Activated CD4-positive, alpha-beta memory T cell treated with anti-CD3 and anti-CD28 coated beads for 36 hours (primary cell): ENCODE measurements at regions of chr12 and their contacts with region 1.

Region 1: GRCh38 chr12:116708826-116709756 is 28.8 kb downstream of the SPRING1 start:
- DNase-seq: peak; percentile 64
- H3K4me3 Mint-ChIP-seq: no peak overlapping the region
- H3K27ac Mint-ChIP-seq: no peak overlapping the region
- H3K4me1 Mint-ChIP-seq: peaks cover 7% of the 10 kb centered on the region
- H3K27me3 Mint-ChIP-seq: no peaks in the 10 kb centered on the region

Region 2: DNA sequence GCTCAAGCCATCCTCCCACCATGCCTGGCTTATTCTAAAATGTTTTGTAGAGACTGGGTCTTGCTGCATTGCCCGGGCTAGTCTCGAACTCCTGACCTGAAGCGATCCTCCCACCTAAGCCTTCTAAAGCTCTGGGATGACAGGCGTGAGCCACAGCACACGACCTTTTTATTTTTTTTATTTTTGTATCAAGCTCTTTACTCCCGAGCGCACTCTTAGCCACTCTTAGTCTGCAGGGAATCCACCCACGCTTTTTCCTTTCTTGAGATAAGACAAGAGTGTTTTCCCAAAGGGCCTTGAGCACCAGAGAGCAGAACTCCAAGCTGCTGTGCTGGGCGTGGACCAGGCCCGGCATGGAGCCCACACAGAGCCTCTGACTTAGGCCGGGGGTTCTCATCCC is 126.5 kb before region 1 on chr12:
- CTCF ChIA-PET with region 1: no interaction called
- POLR2A ChIA-PET with region 1: no interaction called
- intact Hi-C with region 1: no loop called
- DNase-seq: no peak
- H3K4me3 Mint-ChIP-seq: no peak overlapping the region
- H3K27ac Mint-ChIP-seq: no peak overlapping the region
- H3K4me1 Mint-ChIP-seq: no peaks in the 10 kb centered on the region
- H3K27me3 Mint-ChIP-seq: no peaks in the 10 kb centered on the region

Region 3: DNA sequence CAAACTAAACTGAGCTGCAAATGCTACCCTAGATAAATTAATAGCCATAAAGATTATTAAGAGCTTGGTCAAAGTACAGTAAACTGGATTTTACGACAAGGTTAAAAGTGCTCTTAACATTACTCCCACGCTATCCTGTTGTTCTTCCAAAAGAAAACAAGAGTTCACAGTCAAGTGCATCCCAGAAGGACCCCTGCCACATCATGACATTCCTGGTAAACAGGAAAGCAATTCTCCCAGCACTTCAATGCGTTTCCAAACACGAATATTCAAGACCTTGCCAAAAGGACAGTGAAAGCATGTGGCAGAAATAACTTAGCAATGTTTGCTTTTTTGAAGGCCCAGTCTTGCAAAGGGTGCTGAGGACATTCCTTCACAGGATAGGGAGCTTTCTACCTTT is 17.6 kb after region 1 on chr12:
- CTCF ChIA-PET with region 1: interaction called, 13 read pairs
- POLR2A ChIA-PET with region 1: no interaction called
- intact Hi-C with region 1: no loop called
- DNase-seq: no peak
- H3K4me3 Mint-ChIP-seq: no peak overlapping the region
- H3K27ac Mint-ChIP-seq: no peak overlapping the region
- H3K4me1 Mint-ChIP-seq: peaks cover 29% of the 10 kb centered on the region
- H3K27me3 Mint-ChIP-seq: no peaks in the 10 kb centered on the region

Region 4: GRCh38 chr12:116749884-116750283 is 40.8 kb after region 1 on chr12:
- CTCF ChIA-PET with region 1: no interaction called
- POLR2A ChIA-PET with region 1: no interaction called
- intact Hi-C with region 1: no loop called
- DNase-seq: no peak
- H3K4me3 Mint-ChIP-seq: no peak overlapping the region
- H3K27ac Mint-ChIP-seq: no peak overlapping the region
- H3K4me1 Mint-ChIP-seq: no peaks in the 10 kb centered on the region
- H3K27me3 Mint-ChIP-seq: no peaks in the 10 kb centered on the region

Region 5: GRCh38 chr12:116799955-116800354 is 90.9 kb after region 1 on chr12:
- CTCF ChIA-PET with region 1: no interaction called
- POLR2A ChIA-PET with region 1: no interaction called
- intact Hi-C with region 1: no loop called
- DNase-seq: no peak
- H3K4me3 Mint-ChIP-seq: no peak overlapping the region
- H3K27ac Mint-ChIP-seq: no peak overlapping the region
- H3K4me1 Mint-ChIP-seq: no peaks in the 10 kb centered on the region
- H3K27me3 Mint-ChIP-seq: no peaks in the 10 kb centered on the region

Region 6: DNA sequence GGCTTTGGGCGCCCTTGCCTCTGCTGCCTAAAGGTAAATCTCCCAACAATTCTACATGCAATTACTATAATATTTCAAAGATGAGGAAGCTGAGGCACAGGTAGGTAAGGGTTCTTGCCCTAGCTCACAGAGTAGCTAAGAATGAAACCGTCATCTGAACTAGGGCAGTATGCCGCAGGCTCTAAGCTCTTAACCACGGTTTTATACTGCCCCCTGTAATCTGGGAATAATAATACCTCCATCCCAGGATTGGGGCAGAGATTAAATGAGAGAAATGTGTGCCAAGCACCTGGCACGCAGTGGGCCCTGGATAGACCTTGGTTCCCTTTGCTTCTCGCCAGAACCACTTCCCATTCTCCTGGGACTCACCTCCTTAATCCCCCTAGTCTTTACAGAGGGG is 173.7 kb after region 1 on chr12:
- CTCF ChIA-PET with region 1: interaction called, 11 read pairs
- POLR2A ChIA-PET with region 1: interaction called, 3 read pairs
- intact Hi-C with region 1: loop called (anchors 1 kb)
- DNase-seq: no peak
- H3K4me3 Mint-ChIP-seq: no peak overlapping the region
- H3K27ac Mint-ChIP-seq: no peak overlapping the region
- H3K4me1 Mint-ChIP-seq: peaks cover 34% of the 10 kb centered on the region
- H3K27me3 Mint-ChIP-seq: peaks cover 60% of the 10 kb centered on the region

Region 7: GRCh38 chr12:116990971-116991966 is 282.2 kb after region 1 on chr12:
- CTCF ChIA-PET with region 1: no interaction called
- POLR2A ChIA-PET with region 1: no interaction called
- intact Hi-C with region 1: no loop called
- DNase-seq: no peak
- H3K4me3 Mint-ChIP-seq: no peak overlapping the region
- H3K27ac Mint-ChIP-seq: no peak overlapping the region
- H3K4me1 Mint-ChIP-seq: no peaks in the 10 kb centered on the region
- H3K27me3 Mint-ChIP-seq: no peaks in the 10 kb centered on the region